CD8-positive, alpha-beta memory T cell (primary cell): ENCODE measurements at regions of chr1 and their contacts with region 1.

Region 1: GRCh38 chr1:65254319-65255034 is 54.9 kb upstream of the DNAJC6 start:
- DNase-seq: peak; percentile 76 to 90 (median 82)
- H3K4me3 ChIP-seq: peak overlapping the region; percentile 65
- H3K4me3 Mint-ChIP-seq: peak overlapping the region; percentile 86 to 95 (median 94)
- H3K27ac ChIP-seq: peak overlapping the region; percentile 74
- H3K27ac Mint-ChIP-seq: peak overlapping the region; percentile 70 to 97 (median 91)
- H3K4me1 ChIP-seq: peaks cover 12% of the 10 kb centered on the region
- H3K4me1 Mint-ChIP-seq: peaks cover 19 to 32% (median 20%) of the 10 kb centered on the region in 3 donors
- H3K27me3 ChIP-seq: no peaks in the 10 kb centered on the region
- H3K27me3 Mint-ChIP-seq: peaks cover 4 to 6% of the 10 kb centered on the region in 2 donors

Region 2: GRCh38 chr1:65265651-65266351 is 11.3 kb after region 1 on chr1:
- CTCF ChIA-PET with region 1: interaction called, 6 read pairs
- POLR2A ChIA-PET with region 1: interaction called, 18 read pairs
- DNase-seq: peak; percentile 21 to 64 (median 47)
- H3K4me3 ChIP-seq: peak overlapping the region; percentile 57
- H3K4me3 Mint-ChIP-seq: peak overlapping the region; percentile 63 to 88 (median 77)
- H3K27ac ChIP-seq: no peak overlapping the region
- H3K27ac Mint-ChIP-seq: peak overlapping the region in 5 of 8 donors; percentile 35 to 84 (median 75)
- H3K4me1 ChIP-seq: peaks cover 14% of the 10 kb centered on the region
- H3K4me1 Mint-ChIP-seq: peaks cover 20 to 38% (median 21%) of the 10 kb centered on the region in 3 donors
- H3K27me3 ChIP-seq: no peaks in the 10 kb centered on the region
- H3K27me3 Mint-ChIP-seq: peaks cover 19 to 24% of the 10 kb centered on the region in 2 donors

Region 3: DNA sequence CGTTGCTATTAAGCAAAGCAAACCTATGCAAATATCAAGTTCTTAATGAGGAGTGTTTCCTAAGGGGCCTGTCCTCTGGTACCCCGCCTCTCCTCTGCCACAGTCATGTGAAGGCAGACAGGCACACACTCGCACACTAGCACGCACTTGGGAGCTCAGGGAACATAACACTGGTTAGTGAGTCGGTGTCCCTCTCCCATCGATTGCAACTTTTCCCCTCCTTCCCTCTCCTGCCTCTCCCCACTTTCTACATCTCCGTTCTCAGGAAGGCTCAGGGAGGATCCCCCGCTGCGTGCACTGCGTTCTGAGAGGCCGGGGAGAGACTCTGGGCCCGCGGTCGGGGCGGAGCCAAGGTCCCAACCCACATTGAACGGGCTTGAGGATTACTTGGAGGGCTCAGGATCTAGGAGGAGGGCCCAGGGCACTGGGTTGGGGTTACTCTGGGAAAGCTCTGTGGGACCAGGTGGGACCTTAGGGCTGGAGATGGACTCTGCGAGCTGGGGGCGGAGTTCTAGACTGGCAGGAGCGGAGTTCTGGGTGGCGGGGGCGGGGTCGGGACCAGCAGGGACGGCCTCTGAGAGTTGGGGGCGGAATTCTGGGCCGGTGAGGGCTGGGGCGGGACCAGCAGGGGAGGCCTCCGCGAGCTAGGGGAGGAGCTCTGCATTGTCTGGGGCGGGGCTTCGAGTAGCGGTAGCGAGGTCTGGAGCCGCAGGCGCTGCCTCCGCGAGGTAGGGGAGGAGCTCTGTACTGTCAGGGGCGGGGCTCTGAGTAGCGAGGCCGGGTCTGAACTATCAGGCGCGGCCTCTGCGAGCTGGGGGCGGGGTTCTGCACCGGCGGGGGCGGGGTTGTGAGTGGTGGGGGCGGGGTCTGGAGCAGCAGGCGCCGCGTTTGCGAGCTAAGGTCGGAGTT is 165.5 kb after region 1 on chr1:
- CTCF ChIA-PET with region 1: interaction called, 4 read pairs
- POLR2A ChIA-PET with region 1: interaction called, 21 read pairs
- DNase-seq: peak; percentile 97 to 99 (median 98)
- H3K4me3 ChIP-seq: peak overlapping the region; percentile 87
- H3K4me3 Mint-ChIP-seq: no peak overlapping the region
- H3K27ac ChIP-seq: peak overlapping the region; percentile 74
- H3K27ac Mint-ChIP-seq: peak overlapping the region; percentile 83 to 97 (median 94)
- H3K4me1 ChIP-seq: peaks cover 23% of the 10 kb centered on the region
- H3K4me1 Mint-ChIP-seq: peaks cover 16 to 23% (median 22%) of the 10 kb centered on the region in 3 donors
- H3K27me3 ChIP-seq: no peaks in the 10 kb centered on the region
- H3K27me3 Mint-ChIP-seq: peaks cover 0 to 2% of the 10 kb centered on the region in 2 donors